Activated CD4-positive, alpha-beta memory T cell treated with anti-CD3 and anti-CD28 coated beads, Interleukin-2, amount 10 ng/mL, durations not matched to agents 7 days and 5 days (primary cell): ENCODE measurements at regions of chr9 and their contacts with region 1.

Region 1: GRCh38 chr9:124218438-124218982 is 39.2 kb upstream of the NEK6 start:
- DNase-seq: peak; percentile 61
- H3K4me3 Mint-ChIP-seq: no peak overlapping the region
- H3K27ac Mint-ChIP-seq: peak overlapping the region; percentile 48
- H3K4me1 Mint-ChIP-seq: peaks cover 63% of the 10 kb centered on the region
- H3K27me3 Mint-ChIP-seq: peaks cover 4% of the 10 kb centered on the region

Region 2: DNA sequence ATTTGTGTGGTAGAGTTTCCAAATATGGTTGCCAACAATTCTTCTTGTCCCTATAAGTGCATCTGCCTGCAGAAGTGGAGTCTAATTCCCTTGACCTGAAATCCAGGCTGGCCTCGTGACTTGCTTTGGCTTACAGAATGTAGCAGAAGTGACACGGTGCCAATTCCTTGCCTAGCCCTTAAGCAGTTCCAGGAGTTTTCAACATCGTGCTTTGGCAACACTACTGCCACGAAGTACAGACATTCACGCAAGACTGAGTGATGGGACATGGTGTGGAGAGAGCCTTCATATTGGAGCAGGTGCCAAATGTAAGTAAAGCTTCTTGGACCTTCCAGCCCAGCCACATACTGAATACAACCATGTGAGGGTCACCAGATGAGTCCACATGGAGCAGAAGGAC is 53.7 kb before region 1 on chr9:
- CTCF ChIA-PET with region 1: no interaction called
- POLR2A ChIA-PET with region 1: no interaction called
- DNase-seq: no peak
- H3K4me3 Mint-ChIP-seq: no peak overlapping the region
- H3K27ac Mint-ChIP-seq: no peak overlapping the region
- H3K4me1 Mint-ChIP-seq: no peaks in the 10 kb centered on the region
- H3K27me3 Mint-ChIP-seq: peaks cover 38% of the 10 kb centered on the region

Region 3: DNA sequence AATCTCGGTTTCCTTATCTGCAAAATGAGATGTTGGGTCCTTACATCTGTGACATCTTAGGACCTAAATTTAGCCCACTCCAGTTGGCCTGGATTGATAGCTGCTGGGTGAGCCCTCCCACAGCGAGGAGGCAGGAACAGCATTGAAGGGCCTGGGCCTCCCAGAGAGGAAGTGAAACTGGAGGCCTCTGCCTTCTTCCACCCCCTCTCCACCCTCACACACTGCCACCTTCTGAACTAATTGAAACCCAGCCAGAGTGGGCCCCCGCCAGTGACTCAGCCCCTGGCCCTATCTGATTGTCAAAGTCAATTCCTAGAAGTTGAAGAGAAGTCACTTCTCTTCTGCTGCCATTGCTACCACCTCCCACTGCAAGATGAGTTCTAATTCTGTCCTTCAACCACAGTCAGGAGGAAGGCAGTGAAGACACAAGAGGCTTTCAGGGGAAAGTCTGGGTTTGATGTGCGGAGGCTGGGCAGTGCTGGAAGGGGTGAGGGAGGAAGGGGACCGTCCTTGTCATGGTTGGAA is 16.0 kb before region 1 on chr9:
- CTCF ChIA-PET with region 1: interaction called, 13 read pairs
- POLR2A ChIA-PET with region 1: interaction called, 68 read pairs
- DNase-seq: peak; percentile 91
- H3K4me3 Mint-ChIP-seq: peak overlapping the region; percentile 67
- H3K27ac Mint-ChIP-seq: peak overlapping the region; percentile 96
- H3K4me1 Mint-ChIP-seq: peaks cover 78% of the 10 kb centered on the region
- H3K27me3 Mint-ChIP-seq: no peaks in the 10 kb centered on the region

Region 4: GRCh38 chr9:124239249-124240073 is 21.0 kb after region 1 on chr9:
- CTCF ChIA-PET with region 1: interaction called, 11 read pairs
- POLR2A ChIA-PET with region 1: interaction called, 15 read pairs
- DNase-seq: no peak
- H3K4me3 Mint-ChIP-seq: no peak overlapping the region
- H3K27ac Mint-ChIP-seq: peak overlapping the region; percentile 64
- H3K4me1 Mint-ChIP-seq: peaks cover 45% of the 10 kb centered on the region
- H3K27me3 Mint-ChIP-seq: peaks cover 38% of the 10 kb centered on the region